Left cardiac atrium (tissue), 4 donors: ENCODE measurements at regions of chr1 and their contacts with region 1.

Region 1: DNA sequence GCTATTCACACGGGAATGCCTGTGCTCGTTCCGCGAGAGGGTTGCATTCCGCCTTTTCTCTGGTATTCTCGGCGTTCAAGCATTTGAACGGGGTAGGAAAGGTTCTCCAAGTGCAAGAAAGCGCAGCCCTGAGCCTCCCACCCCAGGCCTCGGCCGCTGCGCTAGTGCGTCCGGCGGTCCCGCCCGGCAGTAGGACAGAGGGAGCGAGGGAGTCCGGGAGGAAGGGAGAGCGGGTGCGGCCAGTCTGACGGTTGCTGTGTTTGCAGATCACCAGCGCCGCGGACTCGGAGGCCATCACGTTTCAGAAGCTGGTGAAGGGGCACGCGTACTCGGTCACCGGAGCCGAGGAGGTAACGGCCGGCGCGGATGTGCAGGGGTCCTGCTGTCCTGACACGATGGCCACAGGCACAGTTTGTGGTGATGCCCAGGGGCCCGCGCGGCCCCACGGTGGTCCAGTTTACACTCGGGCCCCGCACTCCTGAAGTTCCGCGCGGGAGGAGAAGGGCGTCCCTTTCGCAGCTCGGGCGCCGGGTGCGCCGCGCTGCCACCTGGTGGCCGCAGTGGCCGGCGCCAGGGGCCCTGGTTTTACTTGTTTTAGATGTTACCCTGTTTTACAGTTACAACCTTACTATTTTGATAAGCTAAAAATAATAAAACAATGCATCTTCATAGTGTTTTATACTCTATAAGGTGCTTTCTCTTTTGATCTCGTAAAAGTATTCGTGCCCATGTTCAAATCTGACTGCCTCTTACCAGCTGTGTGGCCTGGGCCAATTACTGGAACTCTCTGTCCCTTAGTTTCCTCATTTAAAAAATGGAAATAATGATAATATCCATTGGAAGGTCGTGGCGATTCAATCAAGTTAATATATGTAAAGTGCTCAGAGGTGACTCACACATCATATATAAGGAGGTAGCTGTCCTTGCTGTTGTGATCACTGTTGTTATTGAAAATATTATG is 36.7 kb downstream of the CAPN2 start:
- DNase-seq: peak; percentile 72
- ATAC-seq: peak; percentile 88 to 89

Region 2: DNA sequence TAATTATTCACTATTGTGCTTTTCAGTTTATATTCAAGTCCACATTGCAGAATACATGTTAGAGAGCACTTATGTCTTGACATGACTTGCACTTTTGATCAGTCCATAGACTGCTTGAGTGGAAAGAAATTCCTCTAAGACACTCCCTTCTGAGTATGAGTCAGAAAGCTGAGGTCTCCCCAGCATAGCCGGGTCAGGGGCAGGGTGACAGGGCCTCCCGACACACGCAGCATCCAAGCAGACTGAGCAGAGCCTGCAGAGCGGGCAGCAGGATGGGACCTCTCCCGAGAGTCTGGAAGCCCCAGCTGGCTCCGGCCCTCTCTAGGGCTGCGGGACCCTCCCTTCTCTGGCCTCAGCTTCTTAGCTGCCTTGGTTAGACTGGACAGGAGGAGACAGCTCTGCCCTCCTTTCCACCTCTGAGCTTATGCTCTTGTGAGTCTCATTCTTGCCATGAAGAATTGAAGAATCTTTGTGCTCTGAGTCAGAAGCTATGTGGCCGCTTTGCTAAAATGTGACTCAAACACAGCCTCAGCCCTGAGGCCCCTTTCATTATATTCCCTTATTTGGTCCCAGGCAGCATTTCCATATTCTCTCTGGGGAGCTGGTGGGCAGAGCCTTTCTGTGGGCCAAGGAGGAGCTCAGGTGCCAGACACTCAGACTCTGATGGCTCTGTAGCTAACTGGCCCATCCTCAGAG is 48.0 kb before region 1 on chr1:
- intact Hi-C with region 1: loop called in 1 of 2 experiments (anchors 1 kb)
- DNase-seq: no peak
- ATAC-seq: peak; percentile 20 to 86

Region 3: DNA sequence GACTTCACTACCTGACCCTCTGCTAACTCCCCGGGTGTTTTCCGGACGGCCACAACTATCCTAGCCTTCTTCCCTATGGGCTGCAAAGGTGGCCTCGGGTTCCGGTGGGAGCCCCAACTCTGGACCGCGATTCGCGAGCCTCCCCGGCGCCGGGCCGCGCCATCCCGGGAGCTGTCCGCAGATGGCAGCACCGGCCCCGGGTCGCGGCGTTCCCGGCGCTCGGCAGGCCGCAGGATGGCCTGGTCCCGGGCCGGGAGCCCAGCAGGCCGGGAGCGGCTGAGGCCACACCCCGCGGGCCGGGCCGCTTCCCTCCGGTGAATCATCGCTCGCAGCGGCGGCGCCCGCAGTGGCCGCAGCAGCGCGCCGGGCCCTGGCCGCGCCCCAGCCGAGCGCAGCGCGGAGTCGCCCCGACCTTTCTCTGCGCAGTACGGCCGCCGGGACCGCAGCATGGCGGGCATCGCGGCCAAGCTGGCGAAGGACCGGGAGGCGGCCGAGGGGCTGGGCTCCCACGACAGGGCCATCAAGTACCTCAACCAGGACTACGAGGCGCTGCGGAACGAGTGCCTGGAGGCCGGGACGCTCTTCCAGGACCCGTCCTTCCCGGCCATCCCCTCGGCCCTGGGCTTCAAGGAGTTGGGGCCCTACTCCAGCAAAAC is 36.7 kb before region 1 on chr1 and contains the start of gene CAPN2:
- intact Hi-C with region 1: loop called (anchors 1 to 5 kb)
- DNase-seq: peak; percentile 90
- ATAC-seq: peak; percentile 94 to 96
- total RNA-seq, gene CAPN2: 89.1 to 107 TPM